Activated CD4-positive, alpha-beta T cell treated with anti-CD3 and anti-CD28 coated beads for 36 hours (primary cell): ENCODE measurements at regions of chr12 and their contacts with region 1.

Region 1: DNA sequence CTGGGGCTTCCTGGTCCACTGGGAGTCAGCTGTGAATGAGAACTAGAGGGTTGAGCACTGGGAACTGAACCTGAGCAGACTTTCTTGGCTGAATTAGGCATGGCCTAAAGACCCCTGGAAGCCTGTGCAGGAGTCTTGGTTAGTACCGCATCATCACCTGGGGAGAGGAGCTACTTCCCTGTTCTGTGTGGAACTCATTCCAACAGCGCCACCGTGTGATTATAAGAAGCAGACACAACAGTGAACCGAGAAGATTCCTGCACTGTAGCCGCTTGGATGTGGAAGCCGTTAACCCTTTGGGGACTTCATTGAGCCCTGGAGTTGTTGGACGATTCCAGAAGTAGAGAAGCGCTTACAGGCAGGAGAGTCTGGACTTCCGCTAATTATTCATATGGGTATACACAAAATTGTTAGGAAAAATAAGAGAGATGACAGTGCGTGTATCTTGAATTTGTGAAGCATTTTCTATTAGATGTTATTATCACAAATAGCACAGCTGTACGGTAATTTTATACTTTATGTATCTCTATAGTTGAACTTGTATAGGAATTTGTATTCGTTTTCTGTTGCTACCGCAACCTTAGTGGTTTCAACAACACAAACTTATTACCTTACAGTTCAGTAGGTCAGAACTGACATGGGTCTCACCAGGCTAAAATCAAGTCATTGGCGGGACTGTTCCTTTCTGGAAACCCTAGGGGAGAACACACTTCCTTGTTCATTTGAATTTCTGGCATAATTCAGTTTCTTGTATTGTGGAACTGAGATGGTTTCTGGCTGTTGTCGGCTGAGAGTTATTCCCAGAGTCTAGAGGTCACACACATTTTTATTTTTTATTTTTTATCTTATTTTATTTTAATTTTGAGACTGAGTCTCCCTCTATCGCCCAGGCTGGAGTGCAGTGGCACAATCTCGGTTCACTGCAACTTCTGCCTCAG is 100.7 kb downstream of the C2CD5 start:
- DNase-seq: peak; percentile 72
- ATAC-seq: peak; percentile 99
- H3K4me3 Mint-ChIP-seq: no peak overlapping the region
- H3K27ac Mint-ChIP-seq: no peak overlapping the region
- H3K4me1 Mint-ChIP-seq: no peaks in the 10 kb centered on the region
- H3K27me3 Mint-ChIP-seq: no peaks in the 10 kb centered on the region

Region 2: GRCh38 chr12:22083167-22083566 is 360.5 kb before region 1 on chr12:
- CTCF ChIA-PET with region 1: interaction called, 3 read pairs
- POLR2A ChIA-PET with region 1: no interaction called
- intact Hi-C with region 1: loop called (anchors 1 kb)
- DNase-seq: peak; percentile 16
- ATAC-seq: no peak
- H3K4me3 Mint-ChIP-seq: no peak overlapping the region
- H3K27ac Mint-ChIP-seq: no peak overlapping the region
- H3K4me1 Mint-ChIP-seq: no peaks in the 10 kb centered on the region
- H3K27me3 Mint-ChIP-seq: no peaks in the 10 kb centered on the region

Region 3: GRCh38 chr12:22100958-22101748 is 342.5 kb before region 1 on chr12:
- CTCF ChIA-PET with region 1: interaction called, 5 read pairs
- POLR2A ChIA-PET with region 1: no interaction called
- intact Hi-C with region 1: loop called (anchors 1 kb)
- DNase-seq: peak; percentile 62
- ATAC-seq: peak; percentile 65
- H3K4me3 Mint-ChIP-seq: no peak overlapping the region
- H3K27ac Mint-ChIP-seq: no peak overlapping the region
- H3K4me1 Mint-ChIP-seq: peaks cover 14% of the 10 kb centered on the region
- H3K27me3 Mint-ChIP-seq: no peaks in the 10 kb centered on the region

Region 4: DNA sequence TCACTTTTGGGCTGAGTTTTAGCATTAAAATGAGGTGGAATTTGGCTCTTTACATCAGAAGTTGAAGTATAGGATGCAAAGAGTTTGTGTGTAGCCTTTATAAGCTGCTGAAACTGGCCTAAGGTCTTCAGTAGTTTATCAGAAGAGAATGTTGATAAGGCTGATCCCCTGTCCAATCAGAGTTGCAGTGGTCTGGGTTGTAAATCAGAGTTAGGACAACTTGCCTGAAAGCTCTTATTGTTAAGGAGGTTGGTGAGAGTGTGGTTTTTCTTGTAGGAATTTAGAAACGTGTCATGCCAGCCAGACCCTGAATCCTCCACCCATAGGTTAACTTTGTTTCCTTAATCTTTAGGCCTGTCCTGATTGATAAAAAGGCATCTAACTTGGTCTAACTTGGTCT is 252.7 kb before region 1 on chr12:
- CTCF ChIA-PET with region 1: no interaction called
- POLR2A ChIA-PET with region 1: no interaction called
- intact Hi-C with region 1: loop called in 1 of 2 experiments (anchors 5 kb)
- DNase-seq: no peak
- ATAC-seq: no peak
- H3K4me3 Mint-ChIP-seq: no peak overlapping the region
- H3K27ac Mint-ChIP-seq: no peak overlapping the region
- H3K4me1 Mint-ChIP-seq: no peaks in the 10 kb centered on the region
- H3K27me3 Mint-ChIP-seq: no peaks in the 10 kb centered on the region

Region 5: GRCh38 chr12:22459838-22460490 is 16.3 kb after region 1 on chr12:
- CTCF ChIA-PET with region 1: interaction called, 22 read pairs
- POLR2A ChIA-PET with region 1: no interaction called
- intact Hi-C with region 1: no loop called
- DNase-seq: no peak
- ATAC-seq: peak; percentile 64
- H3K4me3 Mint-ChIP-seq: no peak overlapping the region
- H3K27ac Mint-ChIP-seq: no peak overlapping the region
- H3K4me1 Mint-ChIP-seq: no peaks in the 10 kb centered on the region
- H3K27me3 Mint-ChIP-seq: no peaks in the 10 kb centered on the region

Region 6: GRCh38 chr12:22500100-22500499 is 56.5 kb after region 1 on chr12:
- CTCF ChIA-PET with region 1: no interaction called
- POLR2A ChIA-PET with region 1: no interaction called
- intact Hi-C with region 1: no loop called
- DNase-seq: no peak
- ATAC-seq: no peak
- H3K4me3 Mint-ChIP-seq: no peak overlapping the region
- H3K27ac Mint-ChIP-seq: no peak overlapping the region
- H3K4me1 Mint-ChIP-seq: no peaks in the 10 kb centered on the region
- H3K27me3 Mint-ChIP-seq: no peaks in the 10 kb centered on the region

Region 7: DNA sequence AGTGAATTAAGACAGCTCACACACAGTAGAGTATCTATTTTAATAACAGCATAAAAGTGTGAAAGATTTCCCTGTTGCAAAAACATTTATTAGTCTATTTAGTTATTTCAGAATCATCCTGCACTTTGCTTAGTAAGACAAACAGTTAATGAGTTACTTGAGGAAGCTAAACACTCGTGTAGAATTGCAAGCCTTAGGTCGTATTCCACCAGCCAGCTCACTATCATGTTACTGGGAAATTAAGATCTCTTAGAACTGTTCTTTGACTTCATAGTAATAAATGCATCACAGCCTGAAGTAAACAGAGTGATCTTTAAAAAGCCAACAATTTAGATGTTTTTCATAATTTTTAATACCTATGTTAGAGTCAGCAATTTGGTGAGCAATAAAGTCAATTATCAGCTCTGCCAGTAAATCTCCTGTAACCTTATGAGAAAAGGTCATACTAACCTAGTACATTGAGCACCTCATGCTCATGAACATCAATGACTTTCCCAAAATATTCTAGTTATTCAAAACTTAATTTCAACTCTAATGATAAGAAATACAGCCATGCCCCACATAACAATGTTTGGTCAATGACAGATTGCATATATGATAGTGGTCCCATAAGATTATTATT is 154.6 kb after region 1 on chr12:
- CTCF ChIA-PET with region 1: no interaction called
- POLR2A ChIA-PET with region 1: no interaction called
- intact Hi-C with region 1: no loop called
- DNase-seq: no peak
- ATAC-seq: no peak
- H3K4me3 Mint-ChIP-seq: no peak overlapping the region
- H3K27ac Mint-ChIP-seq: no peak overlapping the region
- H3K4me1 Mint-ChIP-seq: peaks cover 4% of the 10 kb centered on the region
- H3K27me3 Mint-ChIP-seq: no peaks in the 10 kb centered on the region